Posterior cingulate gyrus (tissue), 11 donors: ENCODE measurements at regions of chr10 and their contacts with region 1.

Region 1: DNA sequence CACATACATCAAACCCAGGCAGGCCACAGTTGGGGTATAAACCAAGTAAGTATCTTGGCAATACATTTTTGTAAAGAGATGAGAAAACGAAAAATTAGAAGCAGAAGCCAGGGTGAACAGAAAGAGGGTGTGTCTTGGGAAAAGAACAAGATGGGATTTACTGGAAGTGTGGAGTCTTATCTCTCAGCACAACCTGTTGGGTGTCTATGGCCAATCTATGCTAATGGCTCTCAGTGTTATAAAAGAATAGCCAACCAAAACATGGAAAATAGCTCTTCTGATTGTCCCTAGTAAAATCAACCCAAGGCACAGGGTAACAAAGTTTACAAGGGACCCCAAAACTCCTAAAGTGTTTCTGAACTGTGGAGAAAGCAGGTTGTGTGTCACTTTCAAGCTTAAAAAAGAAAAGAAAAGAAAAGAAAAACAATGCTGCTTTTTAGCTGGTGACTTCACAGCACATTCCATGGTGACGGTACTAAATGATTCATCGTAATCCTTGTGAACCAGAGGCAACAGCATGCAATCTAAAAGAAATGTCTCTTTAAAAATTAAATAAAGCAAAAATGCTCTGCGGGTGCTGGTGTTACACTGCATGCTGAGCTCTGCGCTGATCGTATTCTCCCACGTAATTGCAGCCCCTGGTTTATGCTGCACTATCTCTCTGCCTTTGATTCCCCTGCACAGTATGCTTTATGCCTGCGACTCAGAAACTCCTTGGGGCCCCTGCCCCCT is 100.8 kb downstream of the C10orf90 start:
- DNase-seq: no peak

Region 2: GRCh38 chr10:125489731-125490130 is 1079.9 kb before region 1 on chr10:
- intact Hi-C with region 1: no loop called
- DNase-seq: no peak

Region 3: GRCh38 chr10:126663328-126663727 is 93.6 kb after region 1 on chr10:
- intact Hi-C with region 1: loop called (anchors 10 kb)
- DNase-seq: peak; percentile 60 to 97 (median 88)

Region 4: GRCh38 chr10:126687121-126687606 is 117.5 kb after region 1 on chr10:
- intact Hi-C with region 1: no loop called
- DNase-seq: peak in 2 of 10 donors; percentile 70 to 74

Region 5: GRCh38 chr10:126895214-126895781 is 325.6 kb after region 1 on chr10:
- intact Hi-C with region 1: no loop called
- DNase-seq: no peak